HEK293 (cell line): ENCODE measurements at regions of chr6 and their contacts with region 1.

Region 1: GRCh38 chr6:78810146-78810545 is 57.2 kb upstream of the IRAK1BP1 start:
- H3K4me3 ChIP-seq: no peak overlapping the region
- H3K27ac ChIP-seq: no peak overlapping the region
- H3K4me1 ChIP-seq: no peaks in the 10 kb centered on the region
- CTCF ChIP-seq: peak; percentile 62

Region 2: GRCh38 chr6:78436335-78436734 is 373.8 kb before region 1 on chr6:
- CTCF ChIA-PET with region 1: interaction called, 12 read pairs
- POLR2A ChIA-PET with region 1: no interaction called
- H3K4me3 ChIP-seq: no peak overlapping the region
- H3K27ac ChIP-seq: no peak overlapping the region
- H3K4me1 ChIP-seq: no peaks in the 10 kb centered on the region
- CTCF ChIP-seq: no peak; the same call in 1 of the 2 replicates

Region 3: GRCh38 chr6:78824045-78824444 is 13.9 kb after region 1 on chr6:
- CTCF ChIA-PET with region 1: interaction called, 36 read pairs
- POLR2A ChIA-PET with region 1: no interaction called
- H3K4me3 ChIP-seq: no peak overlapping the region
- H3K27ac ChIP-seq: no peak overlapping the region
- H3K4me1 ChIP-seq: no peaks in the 10 kb centered on the region
- CTCF ChIP-seq: no peak